Left ventricle myocardium inferior (tissue), 1 donor: ENCODE measurements at regions of chr10 and their contacts with region 1.

Region 1: DNA sequence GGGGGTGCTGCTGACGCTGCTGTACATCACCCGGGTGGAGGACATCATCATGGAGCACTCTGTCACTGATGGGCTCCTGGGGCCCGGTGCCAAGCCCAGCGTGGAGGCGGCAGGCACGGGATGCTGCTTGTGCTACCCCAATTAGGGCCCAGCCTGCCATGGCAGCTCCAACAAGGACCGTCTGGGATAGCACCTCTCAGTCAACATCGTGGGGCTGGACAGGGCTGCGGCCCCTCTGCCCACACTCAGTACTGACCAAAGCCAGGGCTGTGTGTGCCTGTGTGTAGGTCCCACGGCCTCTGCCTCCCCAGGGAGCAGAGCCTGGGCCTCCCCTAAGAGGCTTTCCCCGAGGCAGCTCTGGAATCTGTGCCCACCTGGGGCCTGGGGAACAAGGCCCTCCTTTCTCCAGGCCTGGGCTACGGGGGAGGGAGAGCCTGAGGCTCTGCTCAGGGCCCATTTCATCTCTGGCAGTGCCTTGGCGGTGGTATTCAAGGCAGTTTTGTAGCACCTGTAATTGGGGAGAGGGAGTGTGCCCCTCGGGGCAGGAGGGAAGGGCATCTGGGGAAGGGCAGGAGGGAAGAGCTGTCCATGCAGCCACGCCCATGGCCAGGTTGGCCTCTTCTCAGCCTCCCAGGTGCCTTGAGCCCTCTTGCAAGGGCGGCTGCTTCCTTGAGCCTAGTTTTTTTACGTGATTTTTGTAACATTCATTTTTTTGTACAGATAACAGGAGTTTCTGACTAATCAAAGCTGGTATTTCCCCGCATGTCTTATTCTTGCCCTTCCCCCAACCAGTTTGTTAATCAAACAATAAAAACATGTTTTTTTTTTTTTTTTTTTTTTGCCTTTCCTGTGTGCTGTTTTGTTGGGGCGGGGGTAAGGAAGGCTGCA is 55.8 kb downstream of the TSPAN15 start:
- DNase-seq: no peak
- H3K4me3 ChIP-seq: peak overlapping the region; percentile 50
- H3K27ac ChIP-seq: peak overlapping the region; percentile 67
- H3K4me1 ChIP-seq: peaks cover 15% of the 10 kb centered on the region
- H3K27me3 ChIP-seq: no peaks in the 10 kb centered on the region
- CTCF ChIP-seq: no peak

Region 2: GRCh38 chr10:69413221-69413865 is 93.7 kb before region 1 on chr10:
- intact Hi-C with region 1: no loop called
- DNase-seq: peak; percentile 72
- H3K4me3 ChIP-seq: no peak overlapping the region
- H3K27ac ChIP-seq: peak overlapping the region; percentile 64
- H3K4me1 ChIP-seq: peaks cover 25% of the 10 kb centered on the region
- H3K27me3 ChIP-seq: no peaks in the 10 kb centered on the region
- CTCF ChIP-seq: peak; percentile 77

Region 3: GRCh38 chr10:69425511-69426298 is 81.4 kb before region 1 on chr10:
- intact Hi-C with region 1: loop called (anchors 5 kb)
- DNase-seq: no peak
- H3K4me3 ChIP-seq: no peak overlapping the region
- H3K27ac ChIP-seq: peak overlapping the region; percentile 29
- H3K4me1 ChIP-seq: peaks cover 14% of the 10 kb centered on the region
- H3K27me3 ChIP-seq: no peaks in the 10 kb centered on the region
- CTCF ChIP-seq: no peak

Region 4: DNA sequence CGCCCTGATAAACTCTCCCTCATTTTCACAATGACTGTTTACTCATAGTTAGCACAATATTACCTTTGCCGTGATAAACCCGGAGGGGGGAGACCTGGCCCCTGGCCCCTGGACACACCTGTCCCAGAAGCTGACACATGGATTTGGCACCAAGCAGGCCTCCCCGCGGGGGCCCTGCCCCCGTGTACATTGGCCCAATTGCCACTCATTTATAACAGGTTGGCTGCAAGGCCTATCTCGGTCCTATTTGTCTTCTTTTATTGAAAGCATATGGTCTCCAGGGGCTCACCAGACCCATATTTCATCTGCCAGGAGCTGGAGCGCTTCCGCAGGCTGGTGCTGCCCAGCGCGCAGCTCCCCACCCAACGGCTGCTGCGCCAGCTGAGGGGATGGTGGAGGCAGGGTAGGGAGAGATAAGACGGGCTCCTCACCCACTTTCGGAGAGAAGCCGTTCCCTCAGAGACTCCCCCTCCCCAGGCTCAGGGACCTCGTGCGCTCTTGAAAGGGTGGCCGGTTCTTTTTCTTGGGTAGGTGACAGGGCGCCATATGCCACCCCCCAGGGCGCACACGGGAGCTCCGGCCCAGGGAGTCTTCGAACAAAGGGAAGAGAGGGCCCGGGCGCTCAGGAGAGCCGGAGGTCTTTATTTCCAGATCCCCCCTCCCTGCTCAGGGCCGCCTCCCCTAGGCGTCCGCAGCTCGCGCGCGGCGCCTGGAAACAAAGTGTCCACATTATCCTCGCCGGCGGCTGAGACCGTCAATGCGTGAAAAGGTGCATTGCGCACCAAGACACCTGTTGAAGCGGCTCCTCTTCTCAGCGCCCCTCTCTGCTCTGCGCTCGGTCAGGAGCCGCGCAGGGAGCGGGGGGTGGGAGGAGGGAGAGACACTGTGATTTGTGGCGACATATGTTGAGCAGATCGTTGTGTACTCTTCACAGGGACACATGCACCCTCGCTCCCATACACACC is 70.5 kb after region 1 on chr10:
- intact Hi-C with region 1: no loop called
- DNase-seq: no peak
- H3K4me3 ChIP-seq: no peak overlapping the region
- H3K27ac ChIP-seq: no peak overlapping the region
- H3K4me1 ChIP-seq: peaks cover 22% of the 10 kb centered on the region
- H3K27me3 ChIP-seq: peaks cover 96% of the 10 kb centered on the region
- CTCF ChIP-seq: no peak